Aorta (tissue), 5 donors: ENCODE measurements at regions of chr19 and their contacts with region 1.

Region 1: GRCh38 chr19:48965040-48965805 is at the start of gene FTL:
- DNase-seq: peak; percentile 99
- ATAC-seq: peak; percentile 94
- H3K4me3 ChIP-seq: peak within 1 kb of the TSS; percentile 56 to 78
- H3K27ac ChIP-seq: peak within 1 kb of the TSS; percentile 80 to 92
- H3K4me1 ChIP-seq: no peaks in the 10 kb centered on the region
- H3K27me3 ChIP-seq: peaks cover 0 to 2% of the 10 kb centered on the region in 2 donors
- total RNA-seq, gene FTL: 3,184 to 3,823 TPM

Region 2: GRCh38 chr19:48795055-48795684 is 170.1 kb before region 1 on chr19:
- intact Hi-C with region 1: loop called in 1 of 2 experiments (anchors 5 kb)
- DNase-seq: peak; percentile 95 to 96
- ATAC-seq: peak; percentile 97
- H3K4me3 ChIP-seq: peak overlapping the region in 1 of 2 donors; percentile 11
- H3K27ac ChIP-seq: peak overlapping the region; percentile 46 to 52
- H3K4me1 ChIP-seq: no peaks in the 10 kb centered on the region
- H3K27me3 ChIP-seq: no peaks in the 10 kb centered on the region

Region 3: GRCh38 chr19:48872182-48872883 is 92.9 kb before region 1 on chr19 and contains the start of gene PPP1R15A:
- intact Hi-C with region 1: loop called (anchors 5 to 10 kb)
- DNase-seq: peak; percentile 97 to 99
- ATAC-seq: peak; percentile 90
- H3K4me3 ChIP-seq: peak within 1 kb of the TSS; percentile 29 to 99
- H3K27ac ChIP-seq: peak within 1 kb of the TSS; percentile 71 to 93
- H3K4me1 ChIP-seq: no peaks in the 10 kb centered on the region
- H3K27me3 ChIP-seq: no peaks in the 10 kb centered on the region
- total RNA-seq, gene PPP1R15A: 57.2 to 182 TPM

Region 4: DNA sequence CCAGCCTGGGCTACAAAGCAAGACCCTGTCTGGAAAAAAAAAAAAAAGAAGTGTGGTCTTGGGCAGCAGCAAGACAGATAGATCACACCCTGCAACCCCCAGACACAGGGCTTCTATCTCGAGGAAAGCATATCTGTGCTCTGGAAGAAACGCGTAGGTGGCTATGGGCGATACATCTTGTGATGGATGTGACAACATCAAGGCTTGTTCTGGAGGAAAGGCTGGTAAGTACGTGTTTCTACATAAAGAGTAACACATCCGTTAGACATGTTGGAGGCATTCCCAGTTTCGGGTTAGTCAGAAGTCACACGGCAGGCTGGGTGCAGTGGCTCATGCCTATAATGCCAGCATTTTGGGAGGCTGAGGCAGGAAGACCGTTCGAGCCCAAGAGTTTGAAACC is 38.3 kb before region 1 on chr19:
- intact Hi-C with region 1: loop called in 1 of 2 experiments (anchors 5 kb)
- DNase-seq: peak in 1 of 2 donors; percentile 83
- ATAC-seq: peak; percentile 71
- H3K4me3 ChIP-seq: no peak overlapping the region
- H3K27ac ChIP-seq: peak overlapping the region in 1 of 2 donors; percentile 23
- H3K4me1 ChIP-seq: no peaks in the 10 kb centered on the region
- H3K27me3 ChIP-seq: no peaks in the 10 kb centered on the region

Region 5: GRCh38 chr19:48993175-48994034 is 28.2 kb after region 1 on chr19 and contains the starts of genes GYS1 and RUVBL2:
- intact Hi-C with region 1: loop called in 1 of 2 experiments (anchors 2 kb)
- DNase-seq: peak; percentile 100
- ATAC-seq: peak; percentile 97
- H3K4me3 ChIP-seq: peak within 1 kb of the TSS; percentile 60 to 97
- H3K27ac ChIP-seq: peak within 1 kb of the TSS; percentile 31 to 100
- H3K4me1 ChIP-seq: no peaks in the 10 kb centered on the region
- H3K27me3 ChIP-seq: no peaks in the 10 kb centered on the region
- total RNA-seq, gene GYS1: 47.5 to 61.9 TPM
- total RNA-seq, gene RUVBL2: 28.9 to 42.1 TPM